Lower leg skin (tissue), 4 donors: ENCODE measurements at regions of chr3 and their contacts with region 1.

Region 1: GRCh38 chr3:97687734-97688133 is 76.8 kb upstream of the ARL6 start:
- DNase-seq: no peak
- H3K4me3 ChIP-seq: no peak overlapping the region
- CTCF ChIP-seq: no peak
- POLR2A ChIP-seq: no peak

Region 2: GRCh38 chr3:97636465-97636864 is 51.3 kb before region 1 on chr3:
- intact Hi-C with region 1: no loop called
- DNase-seq: no peak
- H3K4me3 ChIP-seq: no peak overlapping the region
- CTCF ChIP-seq: no peak
- POLR2A ChIP-seq: no peak

Region 3: DNA sequence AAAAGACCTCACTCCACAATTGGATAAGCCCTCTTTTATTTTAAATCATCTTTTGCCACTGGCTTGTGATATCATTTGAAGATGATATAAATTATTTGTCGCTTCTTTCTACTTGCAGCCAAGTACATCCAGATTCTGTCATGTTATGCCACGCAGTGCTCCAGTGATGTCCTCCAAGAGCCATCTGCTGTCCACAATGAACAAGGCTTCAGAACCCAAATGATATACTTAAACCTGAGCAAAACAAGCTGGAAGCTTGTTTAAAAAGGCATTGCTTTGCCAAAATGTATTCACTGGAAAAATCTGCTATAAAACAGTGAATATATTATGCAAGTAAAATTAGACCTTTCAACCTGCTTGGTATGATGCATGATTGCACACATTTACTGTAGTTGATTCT is 18.0 kb after region 1 on chr3:
- intact Hi-C with region 1: loop called (anchors 1 kb)
- DNase-seq: no peak
- H3K4me3 ChIP-seq: no peak overlapping the region
- CTCF ChIP-seq: no peak
- POLR2A ChIP-seq: no peak